ENCODE measurements at regions of chr7 and their contacts with region 1.

Region 1: DNA sequence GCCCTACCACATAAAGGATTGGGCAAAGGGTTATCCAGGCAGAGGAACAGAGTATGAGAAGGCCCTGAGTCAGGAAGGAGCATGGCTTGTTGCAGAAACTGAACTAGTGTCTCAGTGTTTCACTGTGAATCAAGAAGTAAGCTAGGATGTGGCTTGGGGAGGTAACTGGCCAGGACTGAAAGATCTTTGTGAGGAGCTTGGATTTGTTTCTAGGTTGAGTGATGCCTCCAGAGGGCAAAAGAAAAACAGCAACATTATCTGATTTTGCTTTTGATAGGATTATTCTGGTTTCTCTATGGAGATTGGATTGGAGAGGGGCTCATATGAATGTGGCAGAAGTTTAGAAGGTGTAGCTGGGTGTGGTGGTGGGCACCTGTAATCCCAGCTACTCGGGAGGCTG is 137.9 kb upstream of the HDAC9 start:
- DNase-seq: no peak
- H3K4me3 ChIP-seq: no peak overlapping the region
- H3K27ac ChIP-seq: no peak overlapping the region
- H3K4me1 ChIP-seq: peaks cover 0 to 2% (median 0%) of the 10 kb centered on the region in 4 experiments; a peak in 2 of 7 replicates
- H3K27me3 ChIP-seq: no peaks in the 10 kb centered on the region
- CTCF ChIP-seq: peak in 2 of 3 experiments; percentile 26 to 51; a peak in 2 of 4 replicates
- EP300 ChIP-seq: no peak
- POLR2A ChIP-seq: no peak
- RAD21 ChIP-seq: peak; percentile 44 to 47

Region 2: DNA sequence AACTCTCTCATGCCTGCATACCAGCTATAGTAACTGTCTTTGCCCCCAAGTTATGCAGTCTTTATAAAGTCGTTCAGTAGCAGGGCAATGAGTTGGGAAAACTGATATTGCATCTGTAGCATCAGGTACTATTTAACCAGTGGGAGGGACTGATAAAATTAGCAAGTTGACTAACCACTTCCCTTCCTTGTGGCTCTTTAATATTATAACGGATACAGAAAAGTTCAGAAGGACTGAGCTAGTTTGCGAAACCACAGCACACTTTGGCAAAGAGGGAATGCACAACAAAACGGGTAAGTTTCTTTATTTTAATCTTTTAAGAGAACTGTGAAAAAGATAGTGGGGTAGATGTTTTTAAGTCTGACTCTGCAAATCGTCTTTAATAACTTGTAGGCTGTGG is 67.5 kb before region 1 on chr7:
- CTCF ChIA-PET with region 1: no interaction called
- POLR2A ChIA-PET with region 1: no interaction called
- DNase-seq: no peak
- H3K4me3 ChIP-seq: no peak overlapping the region
- H3K27ac ChIP-seq: no peak overlapping the region
- H3K4me1 ChIP-seq: no peaks in the 10 kb centered on the region
- H3K27me3 ChIP-seq: no peaks in the 10 kb centered on the region
- CTCF ChIP-seq: no peak
- EP300 ChIP-seq: no peak
- POLR2A ChIP-seq: no peak
- RAD21 ChIP-seq: no peak

Region 3: DNA sequence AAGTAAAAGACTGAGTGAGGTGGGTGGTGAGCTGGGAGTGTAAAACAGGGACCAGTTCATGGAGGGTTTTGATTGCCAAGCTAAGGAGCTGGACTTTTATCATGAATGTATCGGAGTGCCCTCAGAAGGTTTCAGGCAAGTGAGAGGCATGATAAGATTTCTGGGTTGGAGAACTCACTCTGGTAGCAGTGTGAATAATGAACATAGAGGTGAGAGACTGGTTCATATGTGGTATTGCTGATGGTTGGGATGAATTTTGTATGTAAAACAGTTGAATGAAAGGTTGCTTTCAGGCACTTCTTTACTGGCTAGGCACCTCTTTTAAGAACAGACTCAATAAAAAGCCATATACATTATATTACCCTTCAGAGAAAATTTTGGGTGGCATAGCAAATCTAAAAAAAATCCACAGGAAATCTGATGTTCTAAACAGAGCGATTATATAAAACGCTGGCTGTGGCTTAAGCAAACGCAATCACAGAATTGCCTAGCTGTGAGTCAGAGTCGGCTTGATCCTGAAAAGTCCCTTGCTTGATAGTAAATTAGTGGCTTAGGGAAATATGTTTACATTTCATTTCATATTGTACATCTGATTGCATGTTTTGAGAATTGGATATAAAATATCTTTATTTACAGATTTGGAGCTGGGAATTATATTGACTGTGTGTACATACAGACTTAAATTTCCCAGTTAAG is 44.9 kb after region 1 on chr7:
- CTCF ChIA-PET with region 1: interaction called, 10 read pairs
- POLR2A ChIA-PET with region 1: no interaction called
- DNase-seq: no peak
- H3K4me3 ChIP-seq: no peak overlapping the region
- H3K27ac ChIP-seq: no peak overlapping the region
- H3K4me1 ChIP-seq: peaks cover 0 to 23% (median 14%) of the 10 kb centered on the region in 4 experiments; a peak in 6 of 7 replicates
- H3K27me3 ChIP-seq: no peaks in the 10 kb centered on the region
- CTCF ChIP-seq: no peak
- EP300 ChIP-seq: no peak
- POLR2A ChIP-seq: no peak
- RAD21 ChIP-seq: no peak

Region 4: DNA sequence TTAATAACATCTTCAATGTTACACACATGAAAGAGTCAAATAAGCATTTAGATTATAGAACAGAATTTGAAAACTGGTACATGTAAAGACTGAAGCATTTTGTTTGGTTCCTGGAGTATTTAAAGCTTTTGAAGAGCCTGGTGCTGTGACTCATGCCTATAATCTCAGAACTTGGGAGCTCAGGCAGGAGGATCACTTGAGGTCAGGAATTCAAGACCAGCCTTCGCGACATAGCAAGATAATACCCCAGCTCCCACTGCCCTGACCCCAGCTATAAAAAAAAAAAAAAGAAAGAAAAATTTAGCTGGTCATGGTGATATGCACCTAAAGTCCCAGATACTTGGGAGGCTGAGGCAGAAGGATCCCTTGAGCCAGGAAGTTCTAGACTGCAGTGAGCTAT is 225.6 kb after region 1 on chr7:
- CTCF ChIA-PET with region 1: interaction called, 94 read pairs
- POLR2A ChIA-PET with region 1: no interaction called
- DNase-seq: no peak
- H3K4me3 ChIP-seq: no peak overlapping the region
- H3K27ac ChIP-seq: no peak overlapping the region; the same call in 1 of the 2 replicates
- H3K4me1 ChIP-seq: no peaks in the 10 kb centered on the region
- H3K27me3 ChIP-seq: peaks cover 0 to 1% (median 0%) of the 10 kb centered on the region in 4 experiments; a peak in 1 of 7 replicates
- CTCF ChIP-seq: no peak
- EP300 ChIP-seq: no peak
- POLR2A ChIP-seq: no peak
- RAD21 ChIP-seq: no peak

Region 5: DNA sequence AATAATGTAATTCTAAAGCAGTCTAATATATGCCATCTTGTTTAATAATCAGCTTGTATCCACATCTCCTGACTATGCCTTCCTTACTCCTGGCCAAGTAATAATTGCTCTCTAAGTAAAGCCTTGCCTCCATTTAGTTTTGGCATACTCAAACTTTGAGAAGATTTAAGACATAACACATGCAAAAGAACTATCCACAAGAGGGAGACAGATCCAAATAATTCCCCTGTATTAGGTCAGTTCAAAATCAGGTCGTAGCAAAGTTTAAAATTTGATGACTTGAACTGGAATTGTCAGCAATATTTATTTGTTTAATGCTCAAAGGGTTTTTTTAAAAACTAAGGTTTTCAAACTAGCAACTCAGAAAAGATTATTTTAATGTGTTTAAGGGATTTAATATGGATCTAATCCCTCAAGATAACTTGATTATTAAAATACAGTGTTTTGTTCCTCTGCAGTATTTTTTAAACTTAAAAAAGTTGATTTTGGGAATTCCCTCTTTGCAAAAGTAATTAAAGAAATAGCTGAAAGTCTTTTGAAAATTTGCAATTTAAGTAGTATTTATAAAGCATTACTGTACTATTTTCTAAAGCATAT is 233.2 kb after region 1 on chr7:
- CTCF ChIA-PET with region 1: interaction called, 94 read pairs
- POLR2A ChIA-PET with region 1: no interaction called
- DNase-seq: no peak
- H3K4me3 ChIP-seq: no peak overlapping the region
- H3K27ac ChIP-seq: no peak overlapping the region
- H3K4me1 ChIP-seq: no peaks in the 10 kb centered on the region
- H3K27me3 ChIP-seq: no peaks in the 10 kb centered on the region
- CTCF ChIP-seq: peak in 1 of 3 experiments; percentile 62; a peak in 2 of 4 replicates
- EP300 ChIP-seq: no peak
- POLR2A ChIP-seq: no peak
- RAD21 ChIP-seq: peak; percentile 67

Region 6: GRCh38 chr7:18666107-18666728 is 308.5 kb after region 1 on chr7:
- CTCF ChIA-PET with region 1: interaction called, 33 read pairs
- POLR2A ChIA-PET with region 1: no interaction called
- DNase-seq: peak; percentile 23 to 88
- H3K4me3 ChIP-seq: no peak overlapping the region
- H3K27ac ChIP-seq: no peak overlapping the region
- H3K4me1 ChIP-seq: no peaks in the 10 kb centered on the region
- H3K27me3 ChIP-seq: no peaks in the 10 kb centered on the region
- CTCF ChIP-seq: peak; percentile 88 to 100 (median 99)
- EP300 ChIP-seq: no peak
- POLR2A ChIP-seq: no peak
- RAD21 ChIP-seq: peak; percentile 84 to 90